ENCODE measurements at regions of chr6 and their contacts with region 1.

Region 1: DNA sequence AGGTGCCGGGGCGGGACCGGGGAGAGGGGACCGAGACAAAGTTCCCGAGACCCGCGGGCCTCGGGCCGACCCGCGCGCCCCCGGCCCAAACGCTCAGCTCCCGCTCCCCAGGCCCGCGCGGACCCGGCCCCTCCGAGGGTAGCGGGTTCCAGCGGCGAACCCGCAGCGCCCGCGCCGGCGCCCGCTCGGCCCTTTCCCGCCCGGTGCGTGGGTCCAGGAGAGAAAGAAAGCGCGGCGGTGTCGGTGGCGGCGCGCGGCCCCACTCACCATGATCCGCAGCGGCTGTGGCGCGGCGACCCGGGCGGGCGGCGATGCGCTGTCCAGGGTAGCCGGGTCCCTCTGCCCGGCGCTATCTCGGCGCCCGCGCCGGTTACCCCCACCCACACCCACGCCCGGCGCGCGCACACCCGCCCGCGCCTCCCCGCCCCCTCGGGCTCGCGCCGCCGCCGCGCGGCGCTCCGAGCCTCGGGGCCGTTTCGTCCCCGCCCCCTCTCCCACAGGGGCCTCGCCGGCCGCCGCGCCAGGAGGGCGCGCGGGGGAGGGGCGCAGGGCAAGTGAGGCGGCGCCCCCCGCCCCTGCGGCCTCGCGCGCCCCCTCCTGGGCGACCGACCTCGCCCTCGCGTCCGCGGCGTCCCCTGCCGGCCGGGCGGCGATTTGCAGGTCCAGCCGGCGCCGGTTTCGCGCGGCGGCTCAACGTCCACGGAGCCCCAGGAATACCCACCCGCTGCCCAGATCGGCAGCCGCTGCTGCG is at the start of gene ELOVL2:
- DNase-seq: peak in 1 of 2 experiments; percentile 90
- H3K4me3 ChIP-seq: peak within 1 kb of the TSS; percentile 39 to 76 (median 51)
- H3K27ac ChIP-seq: no peak within 1 kb of the TSS
- H3K4me1 ChIP-seq: peaks cover 0 to 6% (median 2%) of the 10 kb centered on the region in 4 experiments; a peak in 2 of 7 replicates
- H3K27me3 ChIP-seq: peaks cover 19 to 42% (median 36%) of the 10 kb centered on the region in 4 experiments
- CTCF ChIP-seq: peak; percentile 97 to 100 (median 99)
- EP300 ChIP-seq: peak in 1 of 2 experiments; percentile 22; a peak in 1 of 3 replicates
- POLR2A ChIP-seq: no peak
- RAD21 ChIP-seq: peak; percentile 57 to 77
- total RNA-seq, gene ELOVL2: 0.69 and 0.89 TPM in 2 replicates

Region 2: DNA sequence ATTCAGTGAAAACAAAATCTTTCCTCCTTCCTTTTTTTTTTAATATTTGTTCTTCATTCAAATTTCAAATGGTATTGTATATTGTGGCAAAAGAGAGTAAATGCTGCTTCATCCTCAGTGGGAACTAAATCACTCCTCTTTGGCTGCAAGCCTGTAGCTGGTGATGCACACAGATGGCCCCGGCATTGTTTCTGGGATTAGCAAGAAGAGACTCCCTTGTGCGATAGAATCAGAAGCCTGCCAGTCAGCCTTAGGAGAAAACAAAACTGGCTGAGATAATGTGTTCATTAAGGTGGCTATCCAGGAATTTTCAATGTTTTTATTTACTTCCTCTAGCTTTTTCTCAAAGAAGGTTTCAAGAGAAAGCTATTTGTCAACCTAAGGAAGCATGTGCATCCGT is 20.7 kb after region 1 on chr6:
- CTCF ChIA-PET with region 1: interaction called, 10 read pairs
- POLR2A ChIA-PET with region 1: no interaction called
- DNase-seq: no peak
- H3K4me3 ChIP-seq: no peak overlapping the region
- H3K27ac ChIP-seq: no peak overlapping the region
- H3K4me1 ChIP-seq: no peaks in the 10 kb centered on the region
- H3K27me3 ChIP-seq: no peaks in the 10 kb centered on the region
- CTCF ChIP-seq: no peak
- EP300 ChIP-seq: no peak
- POLR2A ChIP-seq: no peak
- RAD21 ChIP-seq: no peak

Measured in H1 (cell line).